Gastrocnemius medialis (tissue), 4 donors: ENCODE measurements at regions of chr19 and their contacts with region 1.

Region 1: DNA sequence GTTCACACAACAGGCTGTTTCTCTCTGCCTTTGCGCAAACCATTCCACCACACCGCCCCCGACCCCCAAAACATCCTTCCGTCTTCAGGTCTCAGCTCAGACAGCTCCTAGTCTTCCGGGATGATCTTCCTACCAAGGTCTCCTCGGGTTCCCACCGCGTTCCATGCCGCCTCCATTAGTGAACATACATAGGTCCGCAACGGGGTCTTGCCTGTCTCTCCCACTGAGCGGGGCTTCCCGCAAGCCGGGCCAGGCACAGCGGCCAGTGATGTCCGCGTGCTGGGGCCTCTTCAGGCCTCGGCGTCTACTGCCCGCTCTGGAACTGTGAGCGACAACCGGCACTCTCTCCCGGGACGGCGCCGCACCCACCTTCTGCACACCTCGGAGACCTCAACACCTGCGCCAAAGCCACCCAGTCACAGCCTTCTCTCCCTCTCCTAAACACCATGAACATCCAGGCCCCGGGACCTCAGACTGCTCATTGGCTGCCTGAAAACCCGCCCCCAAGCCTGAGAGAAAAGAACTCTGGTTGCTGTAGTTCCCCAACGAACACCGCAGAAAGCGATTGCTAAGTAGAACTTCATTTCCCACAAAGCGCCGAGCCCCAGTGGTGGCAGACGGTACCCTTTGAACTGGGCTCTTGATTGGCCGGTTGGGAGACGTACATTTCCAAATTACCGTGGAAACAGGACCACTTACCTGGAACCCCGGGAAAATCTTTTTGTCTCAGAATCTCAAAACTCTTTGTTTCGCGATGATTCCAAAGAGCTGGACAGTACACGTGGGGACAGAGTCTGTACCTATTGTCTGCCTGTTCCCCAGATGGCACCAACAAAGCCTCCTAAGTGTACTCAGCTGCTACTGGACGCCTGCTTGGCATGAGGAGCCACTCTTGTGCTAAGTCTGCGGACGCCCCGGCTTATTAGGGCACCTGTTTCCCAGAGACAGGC is 9.5 kb downstream of the DYRK1B start:
- DNase-seq: peak; percentile 94 to 95
- ATAC-seq: peak; percentile 93 to 98
- H3K4me3 ChIP-seq: peak overlapping the region; percentile 65 to 93 (median 84)
- H3K27ac ChIP-seq: peak overlapping the region; percentile 84 to 99 (median 92)
- H3K4me1 ChIP-seq: peaks cover 47 to 69% of the 10 kb centered on the region in 2 donors
- H3K27me3 ChIP-seq: no peaks in the 10 kb centered on the region
- CTCF ChIP-seq: peak in 2 of 5 experiments; percentile 28 to 32
- POLR2A ChIP-seq: peak; percentile 80 to 92

Region 2: DNA sequence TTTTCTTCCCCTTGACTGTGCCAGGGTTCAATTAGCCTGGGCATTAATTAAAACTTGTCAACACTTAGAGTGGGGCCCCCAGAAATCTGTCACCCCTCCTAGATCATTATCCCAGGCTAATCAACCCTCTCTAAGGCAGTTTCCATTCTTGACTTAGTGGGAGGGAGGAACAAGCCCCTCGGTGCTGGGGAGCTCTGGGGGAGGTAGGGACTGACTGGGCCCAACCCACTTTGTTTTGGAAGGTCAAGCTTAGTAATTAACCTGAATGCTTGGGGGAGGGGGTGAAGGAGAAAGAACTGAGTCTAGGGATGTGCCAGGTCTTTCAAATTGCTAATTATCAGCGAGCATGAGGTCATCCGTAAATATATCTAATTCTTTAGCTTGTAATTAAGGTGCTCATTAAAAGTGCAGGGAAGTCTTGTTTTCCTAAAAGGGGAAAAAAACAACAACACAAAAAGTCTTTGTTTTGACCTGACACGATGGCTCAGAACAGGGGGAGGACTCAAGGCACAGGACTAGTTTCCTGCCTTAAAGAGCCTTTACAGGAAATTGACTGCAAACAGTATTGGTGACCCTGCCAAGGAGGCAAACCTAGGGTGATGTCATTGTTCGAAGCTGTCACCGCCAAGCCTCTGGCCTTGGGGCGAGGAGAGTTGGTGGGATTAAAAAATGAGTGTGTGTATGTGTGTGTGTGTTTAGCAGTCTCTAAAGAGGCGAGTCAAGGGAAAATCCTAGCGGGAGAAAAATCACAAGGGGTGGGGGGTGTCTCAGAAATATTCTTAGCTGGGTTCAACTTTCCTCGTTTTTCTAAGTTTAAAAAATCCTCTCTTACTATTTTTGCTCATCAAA is 1157.5 kb before region 1 on chr19:
- in situ Hi-C with region 1: loop called in 1 of 4 experiments (anchors 25 kb)
- intact Hi-C with region 1: no loop called
- DNase-seq: no peak
- ATAC-seq: no peak
- H3K4me3 ChIP-seq: no peak overlapping the region
- H3K27ac ChIP-seq: peak overlapping the region; percentile 98 to 100 (median 99)
- H3K4me1 ChIP-seq: peaks cover 99 to 100% of the 10 kb centered on the region in 2 donors
- H3K27me3 ChIP-seq: no peaks in the 10 kb centered on the region
- CTCF ChIP-seq: no peak
- POLR2A ChIP-seq: no peak

Region 3: DNA sequence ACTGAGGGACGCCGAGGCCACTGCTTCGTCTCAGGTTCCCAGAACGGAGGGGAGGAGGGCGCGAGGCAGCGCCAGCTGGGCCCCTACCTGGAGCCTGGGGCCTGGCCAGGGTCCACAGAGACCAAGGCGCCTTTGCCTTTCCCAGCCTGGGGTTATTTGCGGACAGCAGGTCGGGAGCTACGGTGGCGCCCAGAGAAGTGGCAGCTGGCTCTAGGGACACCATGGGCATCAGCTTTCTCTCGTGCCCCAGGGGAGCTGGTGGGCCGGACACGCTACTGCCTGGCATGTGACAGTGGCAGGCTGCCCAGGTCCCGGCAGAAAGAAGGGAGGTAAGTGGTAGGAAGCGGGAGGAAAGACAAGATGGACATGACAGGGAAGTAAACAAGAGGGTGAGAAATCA is 441.7 kb after region 1 on chr19:
- in situ Hi-C with region 1: no loop called
- intact Hi-C with region 1: loop called (anchors 10 kb)
- DNase-seq: peak; percentile 93 to 99
- ATAC-seq: peak; percentile 73 to 79
- H3K4me3 ChIP-seq: peak overlapping the region; percentile 41 to 61 (median 44)
- H3K27ac ChIP-seq: peak overlapping the region; percentile 93 to 98 (median 96)
- H3K4me1 ChIP-seq: peaks cover 73 to 76% of the 10 kb centered on the region in 2 donors
- H3K27me3 ChIP-seq: no peaks in the 10 kb centered on the region
- CTCF ChIP-seq: no peak
- POLR2A ChIP-seq: peak; percentile 36 to 67